ENCODE measurements at regions of chr13 and their contacts with region 1.

Region 1: GRCh38 chr13:23656637-23657371 is 86.6 kb downstream of the TNFRSF19 start:
- DNase-seq: peak; percentile 45
- ATAC-seq: no peak
- H3K4me3 ChIP-seq: no peak overlapping the region
- H3K27ac ChIP-seq: no peak overlapping the region
- H3K4me1 ChIP-seq: peaks cover 67% of the 10 kb centered on the region
- H3K27me3 ChIP-seq: no peaks in the 10 kb centered on the region
- CTCF ChIP-seq: no peak
- EP300 ChIP-seq: no peak
- POLR2A ChIP-seq: no peak
- RAD21 ChIP-seq: no peak

Region 2: GRCh38 chr13:23399347-23399746 is 257.5 kb before region 1 on chr13:
- CTCF ChIA-PET with region 1: no interaction called
- POLR2A ChIA-PET with region 1: no interaction called
- in situ Hi-C with region 1: no loop called
- intact Hi-C with region 1: no loop called
- DNase-seq: no peak
- ATAC-seq: peak; percentile 32; the same call in 2 of the 3 replicates
- H3K4me3 ChIP-seq: no peak overlapping the region
- H3K27ac ChIP-seq: no peak overlapping the region
- H3K4me1 ChIP-seq: peaks cover 13% of the 10 kb centered on the region
- H3K27me3 ChIP-seq: peaks cover 0 to 4% of the 10 kb centered on the region in 2 experiments; a peak in 1 of 5 replicates
- CTCF ChIP-seq: no peak
- EP300 ChIP-seq: no peak
- POLR2A ChIP-seq: no peak
- RAD21 ChIP-seq: no peak

Region 3: DNA sequence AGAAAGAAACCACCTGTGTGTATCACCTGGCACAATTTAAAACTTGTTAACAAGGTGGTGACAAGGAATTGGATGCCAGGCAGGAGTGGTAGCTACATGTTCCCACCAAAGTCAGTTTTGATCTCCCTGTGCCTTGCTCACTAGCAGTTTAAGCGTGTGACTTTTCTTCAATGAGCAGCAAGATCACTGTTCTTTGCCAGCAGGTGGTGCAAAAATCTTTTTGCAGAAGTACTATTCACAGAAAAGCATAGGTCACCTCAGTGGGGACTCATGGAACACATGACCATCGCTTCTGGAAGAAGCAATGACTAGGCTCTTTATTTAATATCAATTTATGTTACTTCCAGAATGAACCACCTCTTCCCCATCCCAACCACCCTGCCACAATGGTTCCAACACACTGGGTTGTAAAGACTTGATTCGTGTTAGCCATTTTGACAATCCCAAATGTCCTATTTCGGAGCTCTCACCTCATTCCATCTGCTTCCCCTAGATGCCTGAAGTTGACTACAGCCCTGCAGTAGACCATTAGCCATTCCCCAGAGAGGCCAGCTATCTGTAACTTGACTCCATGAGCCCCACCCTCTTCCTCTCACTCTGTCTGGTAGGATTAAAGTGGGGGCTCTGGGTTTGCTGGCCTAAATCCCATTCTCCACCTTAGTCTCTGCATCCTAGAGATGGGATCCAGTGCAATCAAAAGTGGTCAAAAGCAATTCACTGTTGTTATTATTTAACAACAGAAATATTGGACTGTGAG is 145.6 kb before region 1 on chr13:
- CTCF ChIA-PET with region 1: no interaction called
- POLR2A ChIA-PET with region 1: no interaction called
- in situ Hi-C with region 1: no loop called
- intact Hi-C with region 1: loop called (anchors 1 kb)
- DNase-seq: peak; percentile 62
- ATAC-seq: peak; percentile 80
- H3K4me3 ChIP-seq: no peak overlapping the region
- H3K27ac ChIP-seq: no peak overlapping the region
- H3K4me1 ChIP-seq: peaks cover 2% of the 10 kb centered on the region
- H3K27me3 ChIP-seq: no peaks in the 10 kb centered on the region
- CTCF ChIP-seq: peak; percentile 72
- EP300 ChIP-seq: no peak
- POLR2A ChIP-seq: no peak
- RAD21 ChIP-seq: peak; percentile 53

Region 4: DNA sequence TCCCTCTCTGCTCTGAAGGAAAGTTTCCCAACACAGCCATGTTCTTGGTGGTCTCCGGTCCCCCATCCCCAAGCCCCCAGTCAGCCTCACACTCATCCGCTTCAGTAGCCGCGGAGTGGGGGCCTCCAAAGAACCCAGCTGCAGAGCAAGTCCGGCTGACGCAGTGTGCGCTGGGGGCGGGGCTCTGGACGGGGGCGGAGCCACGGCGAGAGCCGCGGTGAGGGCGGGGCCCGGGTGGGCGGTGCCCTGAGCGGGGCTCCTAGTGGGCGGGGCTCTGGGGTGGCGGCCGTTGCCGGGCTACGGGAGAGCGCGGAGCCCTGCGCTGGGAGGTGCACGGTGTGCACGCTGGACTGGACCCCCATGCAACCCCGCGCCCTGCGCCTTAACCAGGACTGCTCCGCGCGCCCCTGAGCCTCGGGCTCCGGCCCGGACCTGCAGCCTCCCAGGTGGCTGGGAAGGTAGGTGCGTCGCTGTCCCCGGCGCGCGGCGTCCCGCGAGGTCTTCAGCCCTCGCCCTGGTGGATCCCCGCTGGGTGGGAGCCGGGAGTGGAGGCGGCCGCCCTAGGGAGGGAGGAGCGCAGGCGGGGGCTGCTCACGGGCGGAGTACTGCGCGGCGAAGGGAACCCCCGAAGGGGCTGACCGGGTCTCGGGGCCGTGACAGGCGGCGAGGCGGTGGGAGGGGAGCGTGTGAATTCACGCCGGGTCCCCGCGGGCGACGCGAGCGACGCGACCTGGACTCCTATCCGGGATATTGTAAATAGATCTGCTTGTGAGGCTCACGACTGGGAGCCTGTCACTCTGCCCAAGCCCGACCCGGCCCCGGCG is 77.5 kb before region 1 on chr13:
- CTCF ChIA-PET with region 1: no interaction called
- POLR2A ChIA-PET with region 1: interaction called, 18 read pairs
- in situ Hi-C with region 1: no loop called
- intact Hi-C with region 1: loop called (anchors 2 kb)
- DNase-seq: peak; percentile 79
- ATAC-seq: peak; percentile 96
- H3K4me3 ChIP-seq: peak overlapping the region; percentile 65 to 93 (median 90)
- H3K27ac ChIP-seq: peak overlapping the region; percentile 77
- H3K4me1 ChIP-seq: peaks cover 75% of the 10 kb centered on the region
- H3K27me3 ChIP-seq: no peaks in the 10 kb centered on the region
- CTCF ChIP-seq: no peak
- EP300 ChIP-seq: no peak
- POLR2A ChIP-seq: peak in 1 of 2 experiments; percentile 77; a peak in 3 of 4 replicates
- RAD21 ChIP-seq: no peak; the same call in 1 of the 2 replicates

Region 5: DNA sequence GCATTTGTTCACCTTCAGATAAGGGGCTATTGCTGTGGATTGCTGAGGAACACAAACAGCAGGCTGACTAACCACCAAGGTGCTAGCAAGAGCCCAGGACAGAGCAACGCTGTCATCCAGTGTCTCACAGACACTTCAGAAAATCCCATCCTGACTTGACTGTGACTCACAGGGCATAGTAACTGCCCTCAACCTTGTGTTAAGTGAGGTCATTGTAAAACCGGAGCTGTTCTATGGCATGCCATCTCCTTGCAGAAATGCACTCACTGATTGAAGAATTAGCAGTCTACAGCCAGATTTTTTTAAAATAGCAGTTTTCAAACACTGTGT is 35.5 kb before region 1 on chr13:
- CTCF ChIA-PET with region 1: no interaction called
- POLR2A ChIA-PET with region 1: interaction called, 31 read pairs
- in situ Hi-C with region 1: no loop called
- intact Hi-C with region 1: loop called (anchors 5 kb)
- DNase-seq: peak; percentile 20
- ATAC-seq: peak; percentile 66
- H3K4me3 ChIP-seq: no peak overlapping the region
- H3K27ac ChIP-seq: peak overlapping the region; percentile 26
- H3K4me1 ChIP-seq: peaks cover 57% of the 10 kb centered on the region
- H3K27me3 ChIP-seq: no peaks in the 10 kb centered on the region
- CTCF ChIP-seq: no peak
- EP300 ChIP-seq: no peak
- POLR2A ChIP-seq: no peak
- RAD21 ChIP-seq: no peak

Region 6: GRCh38 chr13:23674795-23675640 is 18.2 kb after region 1 on chr13:
- CTCF ChIA-PET with region 1: no interaction called
- POLR2A ChIA-PET with region 1: interaction called, 12 read pairs
- in situ Hi-C with region 1: no loop called
- intact Hi-C with region 1: no loop called
- DNase-seq: peak; percentile 44
- ATAC-seq: no peak
- H3K4me3 ChIP-seq: no peak overlapping the region
- H3K27ac ChIP-seq: no peak overlapping the region
- H3K4me1 ChIP-seq: peaks cover 31% of the 10 kb centered on the region
- H3K27me3 ChIP-seq: no peaks in the 10 kb centered on the region
- CTCF ChIP-seq: no peak
- EP300 ChIP-seq: 0 out of 4 replicates have a peak, but pooled peaks of 1 of the 2 experiments have one; percentile 14
- POLR2A ChIP-seq: no peak
- RAD21 ChIP-seq: no peak

Region 7: DNA sequence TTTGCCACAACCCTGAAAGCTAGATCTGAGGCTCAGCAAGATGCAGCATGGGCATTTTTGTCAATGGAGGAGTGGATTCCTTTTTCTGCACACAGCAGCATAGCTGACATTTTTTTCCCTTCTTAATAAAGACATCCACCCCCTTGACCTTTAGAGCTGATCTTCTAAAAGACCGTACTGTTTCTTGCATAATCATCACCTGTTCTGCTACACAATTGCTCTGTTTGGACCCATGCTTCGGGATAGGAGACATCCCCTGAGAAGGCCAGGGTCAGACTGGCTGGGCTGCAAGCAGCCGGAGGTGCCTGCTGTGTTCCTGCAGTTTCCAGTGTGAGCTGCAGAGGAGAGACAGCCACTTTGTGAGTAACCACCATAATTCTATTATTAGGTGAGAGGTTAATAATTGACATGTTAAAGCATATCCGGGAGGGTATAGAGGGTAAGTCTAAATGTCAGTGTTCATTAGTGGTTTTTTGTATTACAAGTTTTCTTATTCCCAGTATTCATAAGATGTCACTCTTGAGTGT is 349.0 kb after region 1 on chr13:
- CTCF ChIA-PET with region 1: no interaction called
- POLR2A ChIA-PET with region 1: no interaction called
- in situ Hi-C with region 1: no loop called
- intact Hi-C with region 1: no loop called
- DNase-seq: no peak
- ATAC-seq: peak; percentile 47
- H3K4me3 ChIP-seq: no peak overlapping the region
- H3K27ac ChIP-seq: no peak overlapping the region
- H3K4me1 ChIP-seq: peaks cover 19% of the 10 kb centered on the region
- H3K27me3 ChIP-seq: peaks cover 0 to 20% of the 10 kb centered on the region in 2 experiments; a peak in 3 of 5 replicates
- CTCF ChIP-seq: no peak
- EP300 ChIP-seq: no peak
- POLR2A ChIP-seq: no peak
- RAD21 ChIP-seq: no peak